Vagina (tissue), 2 donors: ENCODE measurements at regions of chr16 and their contacts with region 1.

Region 1: DNA sequence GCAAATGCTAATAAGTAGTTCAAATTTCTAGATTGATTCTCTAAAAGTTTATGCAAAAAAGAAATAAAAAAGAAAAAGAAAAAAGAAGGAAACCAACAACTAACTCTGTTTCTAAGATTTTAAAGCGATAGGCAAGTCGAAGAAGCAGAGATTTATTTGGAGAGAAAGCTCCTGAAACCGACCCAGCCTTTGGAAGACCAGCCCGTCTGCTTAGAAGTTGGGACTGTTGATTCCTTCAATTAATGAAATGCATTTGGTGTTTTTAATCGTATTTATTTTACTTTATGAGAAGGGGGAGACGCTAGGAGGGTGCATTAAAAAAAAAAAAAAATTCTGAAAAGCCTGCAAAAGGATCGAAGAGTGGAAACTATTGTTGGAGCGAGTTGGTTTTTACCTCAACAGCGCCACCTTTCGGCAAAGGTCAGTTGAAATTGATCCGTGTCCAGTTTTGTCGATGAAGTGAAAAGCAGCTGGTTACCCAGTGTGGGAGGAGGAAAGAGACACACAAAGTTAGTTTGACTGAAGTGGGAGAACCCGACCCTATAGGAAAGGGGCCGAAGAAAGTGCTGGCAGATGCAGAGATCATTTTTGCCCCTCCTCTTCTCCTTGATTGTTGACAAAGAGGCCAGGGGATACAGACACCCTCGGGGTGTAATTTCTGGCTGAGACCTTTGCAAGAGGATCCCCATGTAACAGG is 1.5 kb upstream of the MAF start:
- DNase-seq: peak in 1 of 2 donors; percentile 91
- H3K4me3 ChIP-seq: peak overlapping the region; percentile 83 to 91
- H3K27ac ChIP-seq: peak overlapping the region; percentile 98
- H3K4me1 ChIP-seq: peaks cover 20% of the 10 kb centered on the region
- H3K27me3 ChIP-seq: no peaks in the 10 kb centered on the region
- CTCF ChIP-seq: peak; percentile 35 to 91 (median 73)
- POLR2A ChIP-seq: no peak

Region 2: GRCh38 chr16:78122774-78123315 is 1479.2 kb before region 1 on chr16:
- intact Hi-C with region 1: loop called (anchors 10 kb)
- DNase-seq: no peak
- H3K4me3 ChIP-seq: peak overlapping the region in 1 of 2 donors; percentile 6
- H3K27ac ChIP-seq: no peak overlapping the region
- H3K4me1 ChIP-seq: peaks cover 16% of the 10 kb centered on the region
- H3K27me3 ChIP-seq: no peaks in the 10 kb centered on the region
- CTCF ChIP-seq: peak; percentile 54 to 69 (median 58)
- POLR2A ChIP-seq: no peak

Region 3: DNA sequence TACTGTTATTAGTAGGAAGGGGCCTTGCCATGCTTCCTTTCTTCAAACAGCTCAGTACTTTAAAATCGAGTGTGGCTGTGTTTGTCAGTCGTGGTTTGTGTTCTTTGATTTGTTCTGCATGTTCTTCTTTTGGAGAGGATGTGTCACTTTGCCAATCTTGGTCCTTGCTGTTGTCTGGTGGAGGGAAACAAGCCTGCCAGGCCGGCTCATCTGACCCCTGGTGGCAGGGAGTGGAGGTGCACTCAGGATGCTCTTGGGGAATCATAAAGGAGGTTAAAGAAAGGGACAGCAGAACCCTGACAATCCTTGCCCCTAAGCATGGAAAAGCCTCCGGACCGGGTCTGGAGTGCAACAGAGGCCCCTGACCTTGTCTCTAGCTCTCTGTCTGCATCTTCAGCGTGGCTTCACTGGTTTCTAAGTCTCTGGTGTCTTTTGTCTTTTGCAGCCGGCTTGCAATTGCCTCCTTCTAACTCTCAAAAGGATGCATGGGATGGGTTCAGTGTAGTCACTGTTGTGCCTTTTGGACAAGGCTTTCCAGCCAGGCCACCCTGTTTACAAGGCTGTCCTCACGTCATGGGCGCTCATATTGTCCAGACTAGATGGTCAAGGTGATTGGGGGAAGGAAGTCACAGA is 1366.8 kb before region 1 on chr16:
- intact Hi-C with region 1: loop called (anchors 5 kb)
- DNase-seq: no peak
- H3K4me3 ChIP-seq: no peak overlapping the region
- H3K27ac ChIP-seq: no peak overlapping the region
- H3K4me1 ChIP-seq: peaks cover 21% of the 10 kb centered on the region
- H3K27me3 ChIP-seq: no peaks in the 10 kb centered on the region
- CTCF ChIP-seq: peak; percentile 39 to 65 (median 57)
- POLR2A ChIP-seq: no peak

Region 4: DNA sequence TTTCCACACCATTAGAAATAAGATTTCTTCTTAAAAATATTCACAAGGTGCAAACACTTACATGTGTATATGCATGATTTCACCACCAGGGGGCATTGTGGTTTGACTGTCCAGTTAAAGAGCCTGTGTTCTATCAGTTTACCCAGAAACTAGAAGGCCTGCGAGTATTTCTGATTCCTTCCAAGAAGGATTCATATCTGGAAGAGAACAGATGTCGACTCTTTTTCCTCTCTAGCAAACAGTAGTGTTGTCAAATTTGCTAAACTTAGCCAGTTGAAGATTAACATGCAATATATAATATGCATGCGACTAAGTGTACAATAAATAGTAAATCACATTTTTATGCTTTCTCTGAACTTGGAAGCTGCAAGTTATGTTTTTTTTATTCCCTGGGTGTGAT is 1098.5 kb before region 1 on chr16:
- intact Hi-C with region 1: loop called (anchors 2 kb)
- DNase-seq: no peak
- H3K4me3 ChIP-seq: no peak overlapping the region
- H3K27ac ChIP-seq: no peak overlapping the region
- H3K4me1 ChIP-seq: peaks cover 16% of the 10 kb centered on the region
- H3K27me3 ChIP-seq: no peaks in the 10 kb centered on the region
- CTCF ChIP-seq: peak; percentile 53 to 93 (median 90)
- POLR2A ChIP-seq: no peak

Region 5: DNA sequence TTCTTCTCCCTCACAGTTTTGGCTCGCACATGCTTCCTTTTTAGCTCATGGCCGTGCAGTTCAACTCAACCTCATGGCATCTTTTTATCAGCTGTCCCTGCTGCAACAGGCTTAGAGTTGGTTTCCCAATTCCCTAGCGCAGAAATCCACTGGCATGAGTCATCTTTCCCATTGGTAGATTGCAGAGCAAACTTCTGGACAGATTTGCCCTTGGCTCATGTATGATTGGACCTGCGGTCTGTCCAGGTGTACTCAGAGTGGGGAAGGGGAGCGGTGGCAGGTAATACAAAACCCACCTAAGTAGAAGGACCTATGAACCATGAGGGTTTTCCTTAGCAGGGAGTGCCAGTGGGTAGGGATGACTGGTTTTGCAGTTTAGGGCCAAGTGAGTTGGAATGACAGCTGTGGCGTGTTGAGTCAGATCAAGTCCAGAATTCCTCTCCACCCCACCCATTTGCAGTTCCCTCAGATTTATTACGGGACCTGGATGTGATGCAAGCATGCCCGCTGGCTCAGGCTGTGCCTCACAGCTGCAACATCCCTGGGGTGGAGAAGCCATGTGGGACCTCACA is 918.0 kb before region 1 on chr16:
- intact Hi-C with region 1: loop called (anchors 10 kb)
- DNase-seq: peak in 1 of 2 donors; percentile 98
- H3K4me3 ChIP-seq: no peak overlapping the region
- H3K27ac ChIP-seq: peak overlapping the region; percentile 57
- H3K4me1 ChIP-seq: peaks cover 37% of the 10 kb centered on the region
- H3K27me3 ChIP-seq: no peaks in the 10 kb centered on the region
- CTCF ChIP-seq: no peak
- POLR2A ChIP-seq: no peak

Region 6: GRCh38 chr16:79519448-79519847 is 82.6 kb before region 1 on chr16:
- intact Hi-C with region 1: no loop called
- DNase-seq: no peak
- H3K4me3 ChIP-seq: no peak overlapping the region
- H3K27ac ChIP-seq: no peak overlapping the region
- H3K4me1 ChIP-seq: no peaks in the 10 kb centered on the region
- H3K27me3 ChIP-seq: no peaks in the 10 kb centered on the region
- CTCF ChIP-seq: no peak
- POLR2A ChIP-seq: no peak